Endothelial cell of umbilical vein (primary cell): ENCODE measurements at regions of chr2 and their contacts with region 1.

Region 1: DNA sequence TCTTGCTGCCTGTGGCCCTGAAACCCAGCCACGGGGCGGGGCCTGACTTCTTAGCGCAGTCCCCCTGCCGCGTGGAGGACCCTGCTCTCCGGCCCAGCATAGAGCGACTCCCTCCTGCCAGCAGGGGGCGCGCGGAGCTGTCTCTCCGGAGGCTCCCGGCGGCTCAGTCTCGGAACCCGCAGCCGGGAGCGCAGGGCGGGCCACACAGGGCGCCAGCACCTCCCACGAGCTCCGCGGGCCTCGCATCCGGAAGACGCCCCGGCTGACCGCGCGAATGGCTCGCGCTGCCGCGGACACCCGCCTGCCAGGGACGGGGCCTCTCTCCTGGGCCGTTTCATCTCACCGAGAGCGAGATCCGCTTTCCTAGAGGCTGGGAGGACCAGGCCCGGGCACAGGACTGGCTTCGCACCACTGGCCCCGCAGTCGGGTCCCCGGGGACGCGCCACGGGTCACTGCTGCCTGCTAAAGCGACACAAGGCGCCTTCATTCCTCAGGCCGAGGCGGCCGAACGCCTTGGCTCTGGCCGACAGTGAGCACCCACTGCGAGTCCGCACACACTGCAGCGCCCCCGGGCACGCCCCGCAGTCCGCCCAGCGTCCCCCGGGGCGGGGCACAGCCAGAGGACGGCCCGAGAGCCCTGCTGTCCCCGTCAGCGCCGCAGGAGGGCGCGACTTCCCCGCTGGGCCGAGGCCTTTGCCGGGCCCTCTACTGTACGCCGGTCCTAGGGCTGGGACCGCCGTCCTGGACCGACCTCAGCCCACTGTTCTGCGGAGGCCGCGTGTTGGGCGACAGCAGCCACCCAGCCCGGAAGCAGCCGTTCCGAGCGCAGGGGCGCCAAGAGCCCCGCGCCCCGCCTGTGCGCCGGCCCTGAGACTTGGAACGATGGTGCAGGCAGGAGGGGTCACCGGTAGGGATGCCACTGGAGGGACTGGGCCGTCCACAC is 39.0 kb upstream of the ARHGEF4 start:
- DNase-seq: peak; percentile 82
- H3K4me3 ChIP-seq: peak overlapping the region; percentile 41 to 60 (median 60)
- H3K27ac ChIP-seq: peak overlapping the region; percentile 50
- H3K4me1 ChIP-seq: peaks cover 7% of the 10 kb centered on the region
- H3K27me3 ChIP-seq: peaks cover 0 to 3% of the 10 kb centered on the region in 2 experiments
- CTCF ChIP-seq: peak; percentile 89 to 99
- POLR2A ChIP-seq: peak; percentile 68

Region 2: DNA sequence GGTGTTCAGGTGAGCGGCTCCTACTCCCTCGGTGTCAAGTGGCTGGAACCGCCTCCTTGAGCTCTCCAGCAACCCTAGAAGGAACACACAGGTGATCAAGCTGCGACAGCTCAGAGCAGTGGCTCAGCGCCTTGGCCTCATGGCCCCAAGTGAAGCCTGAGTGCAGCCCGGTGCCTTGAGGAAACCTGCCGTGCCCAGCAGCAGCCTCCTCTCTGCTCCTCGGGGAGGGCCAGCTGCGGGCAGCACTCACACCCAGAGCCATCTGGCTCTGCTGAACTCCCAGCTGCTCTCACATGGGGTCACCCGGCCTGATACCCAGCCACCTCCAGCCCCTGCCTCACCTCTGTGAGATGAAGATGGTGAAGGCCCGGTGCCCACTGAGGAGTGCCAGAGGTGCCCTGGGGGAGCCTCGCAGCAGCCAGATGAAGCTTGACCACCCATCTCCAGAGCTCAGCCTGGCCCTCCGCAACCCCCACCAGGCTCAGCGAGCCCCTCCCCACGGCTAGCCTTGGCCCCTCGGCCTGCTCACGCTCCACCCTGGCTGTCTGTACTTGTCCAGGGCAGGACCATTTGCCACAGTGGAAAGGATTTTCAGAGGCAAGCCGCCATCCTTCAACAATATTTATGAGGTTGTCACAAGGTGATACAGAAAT is 888.9 kb before region 1 on chr2:
- CTCF ChIA-PET with region 1: no interaction called
- POLR2A ChIA-PET with region 1: no interaction called
- dilution Hi-C with region 1: no loop called
- intact Hi-C with region 1: no loop called
- DNase-seq: no peak
- H3K4me3 ChIP-seq: no peak overlapping the region
- H3K27ac ChIP-seq: no peak overlapping the region
- H3K4me1 ChIP-seq: no peaks in the 10 kb centered on the region
- H3K27me3 ChIP-seq: no peaks in the 10 kb centered on the region
- CTCF ChIP-seq: no peak
- POLR2A ChIP-seq: no peak

Region 3: DNA sequence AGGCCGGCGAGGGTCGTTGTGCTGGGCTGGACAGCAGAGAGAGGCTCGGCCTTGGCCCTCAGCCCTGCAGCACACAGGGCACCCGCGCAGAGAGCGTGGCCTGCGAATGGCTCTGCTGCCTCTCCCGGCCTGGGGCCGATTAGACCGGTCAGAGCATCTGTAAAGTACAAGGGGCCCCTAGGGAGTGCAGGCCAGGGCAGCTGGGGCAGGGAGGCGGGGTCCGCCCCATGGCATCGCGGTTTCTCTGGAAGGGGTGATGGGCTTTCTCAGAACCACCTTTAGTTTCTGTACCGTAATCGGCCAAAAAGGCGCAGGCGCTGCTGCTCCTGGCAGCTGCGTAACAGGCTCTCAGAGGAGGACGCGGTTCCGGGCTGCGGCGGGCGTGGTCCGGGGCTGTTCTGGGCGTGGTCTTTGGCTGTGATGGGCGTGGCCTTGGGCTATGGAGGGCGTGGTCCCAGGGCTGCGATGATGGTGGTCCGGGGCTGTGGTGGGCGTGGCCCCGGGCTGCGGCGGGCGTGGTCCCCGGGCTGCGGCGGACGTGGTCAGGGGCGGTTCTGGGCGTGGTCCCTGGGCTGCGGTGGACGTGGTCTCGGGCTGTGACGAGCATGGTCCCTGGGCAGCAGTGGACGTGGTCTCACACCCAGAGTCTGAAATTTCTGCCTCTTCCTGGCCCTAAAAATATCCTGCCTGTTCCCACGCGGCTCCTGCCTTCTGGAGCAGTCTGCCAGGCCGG is 70.3 kb before region 1 on chr2:
- CTCF ChIA-PET with region 1: interaction called, 5 read pairs
- POLR2A ChIA-PET with region 1: no interaction called
- dilution Hi-C with region 1: no loop called
- intact Hi-C with region 1: loop called (anchors 1 kb)
- DNase-seq: peak; percentile 72
- H3K4me3 ChIP-seq: peak overlapping the region; percentile 30 to 47 (median 33)
- H3K27ac ChIP-seq: no peak overlapping the region
- H3K4me1 ChIP-seq: peaks cover 8% of the 10 kb centered on the region
- H3K27me3 ChIP-seq: no peaks in the 10 kb centered on the region
- CTCF ChIP-seq: peak in 1 of 2 donors; percentile 8
- POLR2A ChIP-seq: peak; percentile 40

Region 4: GRCh38 chr2:130836501-130837174 is 38.9 kb after region 1 on chr2 and contains the start of gene ARHGEF4:
- CTCF ChIA-PET with region 1: interaction called, 6 read pairs
- POLR2A ChIA-PET with region 1: no interaction called
- dilution Hi-C with region 1: no loop called
- intact Hi-C with region 1: loop called (anchors 5 kb)
- DNase-seq: no peak
- H3K4me3 ChIP-seq: no peak within 1 kb of the TSS
- H3K27ac ChIP-seq: no peak within 1 kb of the TSS
- H3K4me1 ChIP-seq: no peaks in the 10 kb centered on the region
- H3K27me3 ChIP-seq: peaks cover 12 to 23% of the 10 kb centered on the region in 2 experiments
- CTCF ChIP-seq: no peak
- POLR2A ChIP-seq: no peak
- total RNA-seq, gene ARHGEF4: not detected in 2 replicates

Region 5: DNA sequence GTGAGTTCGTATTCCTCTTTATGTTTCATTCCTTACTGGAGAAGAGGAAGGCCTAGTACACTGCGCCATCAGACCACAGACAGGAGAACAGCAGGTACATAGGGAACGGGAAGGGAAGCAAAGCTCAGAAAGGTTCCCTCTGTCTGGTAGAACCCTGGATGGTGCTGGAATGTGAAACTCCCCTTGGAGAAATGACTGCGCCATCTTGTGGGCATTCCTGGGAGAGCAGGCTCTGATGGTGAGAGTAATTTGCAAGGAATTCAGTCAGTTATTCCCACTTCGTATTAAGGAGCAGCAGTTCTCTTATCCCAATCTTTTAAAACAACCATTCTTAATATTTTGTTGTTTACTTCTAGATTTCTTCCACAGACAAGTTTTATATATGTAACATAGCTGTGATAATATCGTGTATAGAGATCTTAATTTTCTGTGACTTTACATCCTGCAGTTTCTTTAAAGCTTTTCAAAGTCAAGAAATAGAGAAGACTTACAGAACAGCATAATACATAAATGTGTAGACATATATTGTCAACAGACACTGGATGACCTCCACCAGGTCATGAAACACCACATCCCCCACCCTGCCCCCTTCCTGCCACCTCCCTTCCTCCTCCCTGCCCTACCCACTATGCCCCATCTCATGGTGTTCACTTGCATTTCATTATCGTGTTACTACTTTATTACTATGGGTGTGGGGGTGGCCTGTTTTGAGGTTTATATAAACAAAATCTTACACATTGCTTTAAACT is 122.8 kb after region 1 on chr2:
- CTCF ChIA-PET with region 1: interaction called, 66 read pairs
- POLR2A ChIA-PET with region 1: no interaction called
- dilution Hi-C with region 1: no loop called
- intact Hi-C with region 1: loop called (anchors 1 kb)
- DNase-seq: peak; percentile 72
- H3K4me3 ChIP-seq: no peak overlapping the region
- H3K27ac ChIP-seq: no peak overlapping the region
- H3K4me1 ChIP-seq: no peaks in the 10 kb centered on the region
- H3K27me3 ChIP-seq: no peaks in the 10 kb centered on the region
- CTCF ChIP-seq: peak; percentile 85 to 92
- POLR2A ChIP-seq: no peak

Region 6: GRCh38 chr2:131105156-131105949 is 307.6 kb after region 1 on chr2 and contains the start of gene PLEKHB2:
- CTCF ChIA-PET with region 1: no interaction called
- POLR2A ChIA-PET with region 1: no interaction called
- dilution Hi-C with region 1: no loop called
- intact Hi-C with region 1: loop called (anchors 5 kb)
- DNase-seq: peak; percentile 93
- H3K4me3 ChIP-seq: peak within 1 kb of the TSS; percentile 86 to 99 (median 98)
- H3K27ac ChIP-seq: peak within 1 kb of the TSS; percentile 86
- H3K4me1 ChIP-seq: peaks cover 21% of the 10 kb centered on the region
- H3K27me3 ChIP-seq: no peaks in the 10 kb centered on the region
- CTCF ChIP-seq: peak in 1 of 2 donors; percentile 30
- POLR2A ChIP-seq: peak; percentile 93
- total RNA-seq, gene PLEKHB2: 56.5 and 56.9 TPM in 2 replicates

Region 7: GRCh38 chr2:131322209-131322608 is 524.4 kb after region 1 on chr2:
- CTCF ChIA-PET with region 1: no interaction called
- POLR2A ChIA-PET with region 1: no interaction called
- dilution Hi-C with region 1: no loop called
- intact Hi-C with region 1: no loop called
- DNase-seq: no peak
- H3K4me3 ChIP-seq: no peak overlapping the region
- H3K27ac ChIP-seq: no peak overlapping the region
- H3K4me1 ChIP-seq: no peaks in the 10 kb centered on the region
- H3K27me3 ChIP-seq: no peaks in the 10 kb centered on the region
- CTCF ChIP-seq: no peak
- POLR2A ChIP-seq: no peak